Mammary epithelial cell (primary cell): ENCODE measurements at regions of chr14 and their contacts with region 1.

Region 1: GRCh38 chr14:88616697-88617096 is 53.9 kb downstream of the ZC3H14 start:
- DNase-seq: peak; percentile 90
- H3K4me3 ChIP-seq: no peak overlapping the region
- H3K27ac ChIP-seq: peak overlapping the region; percentile 9
- H3K4me1 ChIP-seq: peaks cover 49% of the 10 kb centered on the region
- H3K27me3 ChIP-seq: no peaks in the 10 kb centered on the region
- CTCF ChIP-seq: no peak

Region 2: GRCh38 chr14:88879022-88879421 is 262.3 kb after region 1 on chr14:
- CTCF ChIA-PET with region 1: no interaction called
- dilution Hi-C with region 1: no loop called
- in situ Hi-C with region 1: no loop called
- intact Hi-C with region 1: loop called (anchors 5 kb)
- DNase-seq: peak; percentile 74
- H3K4me3 ChIP-seq: no peak overlapping the region
- H3K27ac ChIP-seq: no peak overlapping the region
- H3K4me1 ChIP-seq: peaks cover 8% of the 10 kb centered on the region
- H3K27me3 ChIP-seq: no peaks in the 10 kb centered on the region
- CTCF ChIP-seq: no peak

Region 3: DNA sequence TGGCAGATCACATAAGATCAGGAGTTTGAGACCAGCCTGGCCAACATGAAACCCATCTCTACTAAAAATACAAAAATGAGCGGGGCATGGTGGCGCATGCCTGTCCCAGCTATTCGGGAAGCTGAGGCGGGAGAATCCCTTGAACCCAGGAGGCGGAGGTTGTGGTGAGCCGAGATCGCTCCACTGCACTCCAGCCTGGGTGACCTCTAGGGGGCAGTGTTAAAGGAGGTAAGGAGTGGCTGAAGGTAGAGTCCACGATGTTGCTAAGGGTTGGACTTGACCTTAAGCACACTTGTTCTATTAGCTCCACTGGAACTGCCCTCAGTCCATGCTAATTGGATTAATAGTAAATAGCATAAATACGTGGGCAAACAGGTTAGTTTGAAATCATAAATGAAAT is 1577.2 kb after region 1 on chr14:
- CTCF ChIA-PET with region 1: no interaction called
- dilution Hi-C with region 1: no loop called
- in situ Hi-C with region 1: no loop called
- intact Hi-C with region 1: no loop called
- DNase-seq: no peak
- H3K4me3 ChIP-seq: no peak overlapping the region
- H3K27ac ChIP-seq: no peak overlapping the region
- H3K4me1 ChIP-seq: no peaks in the 10 kb centered on the region
- H3K27me3 ChIP-seq: peaks cover 3% of the 10 kb centered on the region
- CTCF ChIP-seq: peak in 1 of 2 donors; percentile 29